ENCODE measurements at regions of chr13 and their contacts with region 1.

Region 1: DNA sequence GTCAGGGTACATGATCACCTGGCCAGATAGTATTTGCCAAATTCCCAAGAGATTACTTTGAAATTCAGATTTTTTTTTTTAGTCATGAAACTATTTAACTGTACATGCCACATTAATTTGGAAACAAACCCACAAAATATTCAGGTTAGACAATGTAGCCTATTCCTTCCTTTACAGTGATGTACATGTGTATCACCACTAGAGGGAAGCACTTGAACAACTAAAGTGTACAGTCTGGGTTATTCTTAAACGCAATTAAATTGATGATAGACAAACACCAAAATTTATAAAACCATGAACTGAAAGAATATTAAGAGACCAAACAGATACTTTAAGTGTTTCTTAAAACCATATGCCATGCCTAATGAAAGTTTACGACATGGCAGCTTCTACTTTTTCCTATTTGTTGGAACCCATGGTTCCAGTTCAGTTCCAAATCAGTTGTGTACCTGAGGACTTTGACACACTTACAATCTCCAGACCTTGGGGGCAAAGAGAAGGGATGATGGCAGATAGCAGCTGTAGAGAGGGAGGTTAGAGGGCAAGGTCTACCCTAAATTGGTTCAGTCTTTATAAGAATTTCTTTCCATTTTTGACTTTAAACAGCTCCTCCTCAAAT is 52.8 kb downstream of the TNFSF13B start:
- DNase-seq: peak; percentile 59
- H3K4me3 Mint-ChIP-seq: no peak overlapping the region
- H3K27ac Mint-ChIP-seq: no peak overlapping the region
- H3K4me1 Mint-ChIP-seq: no peaks in the 10 kb centered on the region
- H3K27me3 Mint-ChIP-seq: peaks cover 88% of the 10 kb centered on the region
- CTCF ChIP-seq: peak; percentile 59

Region 2: GRCh38 chr13:108227651-108228272 is 94.6 kb before region 1 on chr13:
- CTCF ChIA-PET with region 1: interaction called, 4 read pairs
- POLR2A ChIA-PET with region 1: no interaction called
- intact Hi-C with region 1: loop called (anchors 2 kb)
- DNase-seq: peak; percentile 46
- H3K4me3 Mint-ChIP-seq: no peak overlapping the region
- H3K27ac Mint-ChIP-seq: no peak overlapping the region
- H3K4me1 Mint-ChIP-seq: peaks cover 12% of the 10 kb centered on the region
- H3K27me3 Mint-ChIP-seq: no peaks in the 10 kb centered on the region
- CTCF ChIP-seq: peak; percentile 56

Region 3: DNA sequence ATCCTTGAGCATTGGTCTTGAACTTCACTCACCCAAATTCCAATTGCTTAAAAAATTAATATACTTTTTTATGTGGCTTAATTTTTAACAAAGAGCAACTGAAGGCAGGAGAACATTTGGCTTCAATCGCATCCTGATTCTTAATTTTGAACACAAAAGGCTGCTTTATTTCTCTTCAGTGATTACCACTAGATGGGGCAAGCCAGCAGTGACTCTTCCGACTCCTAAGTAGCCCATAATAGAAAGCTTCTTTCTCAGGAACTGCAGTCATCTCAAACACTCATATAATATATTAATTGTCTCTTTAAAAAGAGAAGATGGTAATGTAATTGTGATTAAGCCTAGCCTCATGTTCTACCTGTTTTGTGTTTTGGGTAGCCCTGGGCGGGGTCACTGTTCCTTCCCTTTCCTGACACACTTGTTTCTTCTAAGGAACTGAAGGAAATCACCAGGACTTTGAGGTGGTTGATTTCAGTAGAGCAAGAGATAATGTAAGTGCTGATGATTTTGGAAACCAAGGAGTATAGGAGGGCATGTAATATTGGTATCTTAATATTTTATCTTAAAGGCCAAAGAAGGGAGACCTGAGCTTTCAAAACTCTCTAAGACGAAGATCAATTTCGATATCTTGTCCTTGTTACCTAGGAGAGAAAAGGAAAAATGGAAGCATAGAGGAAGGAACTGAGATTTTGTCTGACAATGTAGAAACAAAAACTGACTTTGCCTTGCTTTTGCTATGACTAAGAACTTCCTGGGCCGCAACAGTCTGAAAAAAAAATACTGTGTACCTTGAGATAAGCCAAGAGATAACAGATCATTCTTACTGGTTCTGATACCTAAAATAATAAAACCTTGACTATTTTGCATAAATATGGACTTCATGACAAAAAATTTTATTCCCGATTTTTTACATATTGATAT is 20.3 kb after region 1 on chr13:
- CTCF ChIA-PET with region 1: interaction called, 6 read pairs
- POLR2A ChIA-PET with region 1: no interaction called
- intact Hi-C with region 1: loop called (anchors 2 kb)
- DNase-seq: peak; percentile 52
- H3K4me3 Mint-ChIP-seq: no peak overlapping the region
- H3K27ac Mint-ChIP-seq: no peak overlapping the region
- H3K4me1 Mint-ChIP-seq: no peaks in the 10 kb centered on the region
- H3K27me3 Mint-ChIP-seq: peaks cover 90% of the 10 kb centered on the region
- CTCF ChIP-seq: peak; percentile 47

Region 4: GRCh38 chr13:109288151-109288709 is 965.9 kb after region 1 on chr13:
- CTCF ChIA-PET with region 1: no interaction called
- POLR2A ChIA-PET with region 1: no interaction called
- intact Hi-C with region 1: no loop called
- DNase-seq: no peak
- H3K4me3 Mint-ChIP-seq: no peak overlapping the region
- H3K27ac Mint-ChIP-seq: no peak overlapping the region
- H3K4me1 Mint-ChIP-seq: no peaks in the 10 kb centered on the region
- H3K27me3 Mint-ChIP-seq: no peaks in the 10 kb centered on the region
- CTCF ChIP-seq: no peak

Measured in MCF 10A (cell line).